MCF 10A (cell line): ENCODE measurements at regions of chr1 and their contacts with region 1.

Region 1: DNA sequence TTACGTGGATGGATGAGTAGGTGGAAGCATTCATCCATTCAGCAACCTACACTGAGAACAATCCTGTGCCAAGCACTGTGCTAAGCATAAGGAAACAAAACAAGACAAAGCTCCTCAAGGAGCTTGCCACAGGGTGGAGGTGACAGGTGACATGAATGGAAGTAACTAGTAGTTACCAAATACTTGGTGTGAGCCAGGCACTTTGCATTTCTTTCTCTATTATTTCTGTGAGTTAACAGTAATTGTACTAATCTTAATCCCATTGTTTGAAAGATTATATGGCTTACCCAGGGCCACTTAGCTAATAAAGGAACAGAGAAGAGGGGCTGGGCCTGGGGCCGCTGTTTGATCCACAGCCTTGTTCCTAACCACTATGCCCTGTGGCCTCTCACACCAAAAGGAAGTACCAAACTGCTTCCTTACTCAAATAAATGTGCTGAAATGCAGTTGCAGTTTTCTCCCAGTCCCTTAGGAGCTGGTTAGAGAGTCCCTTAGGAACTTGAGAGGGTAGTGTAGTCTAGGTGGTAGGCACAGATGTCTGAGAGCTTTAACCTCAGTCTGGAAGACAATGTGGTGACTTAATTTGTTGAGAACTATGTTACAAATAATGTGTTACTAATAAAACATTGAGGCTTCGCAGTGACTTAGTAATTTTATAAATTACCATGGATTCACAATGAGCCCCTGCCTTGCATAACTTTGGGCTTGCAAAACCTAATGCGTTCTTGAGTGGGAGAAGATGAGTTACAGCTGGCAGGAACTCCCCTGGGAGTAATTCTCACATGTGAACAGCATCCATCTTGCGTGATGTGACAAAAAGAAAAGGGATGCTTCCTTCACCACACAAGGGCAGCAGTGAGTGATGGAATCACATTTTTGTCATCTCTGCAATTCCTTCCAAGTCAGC is 69.8 kb downstream of the MPZL1 start:
- DNase-seq: peak; percentile 64
- H3K4me3 Mint-ChIP-seq: peak overlapping the region; percentile 8
- H3K27ac Mint-ChIP-seq: peak overlapping the region; percentile 95
- H3K4me1 Mint-ChIP-seq: peaks cover 65% of the 10 kb centered on the region
- H3K27me3 Mint-ChIP-seq: no peaks in the 10 kb centered on the region
- CTCF ChIP-seq: no peak

Region 2: DNA sequence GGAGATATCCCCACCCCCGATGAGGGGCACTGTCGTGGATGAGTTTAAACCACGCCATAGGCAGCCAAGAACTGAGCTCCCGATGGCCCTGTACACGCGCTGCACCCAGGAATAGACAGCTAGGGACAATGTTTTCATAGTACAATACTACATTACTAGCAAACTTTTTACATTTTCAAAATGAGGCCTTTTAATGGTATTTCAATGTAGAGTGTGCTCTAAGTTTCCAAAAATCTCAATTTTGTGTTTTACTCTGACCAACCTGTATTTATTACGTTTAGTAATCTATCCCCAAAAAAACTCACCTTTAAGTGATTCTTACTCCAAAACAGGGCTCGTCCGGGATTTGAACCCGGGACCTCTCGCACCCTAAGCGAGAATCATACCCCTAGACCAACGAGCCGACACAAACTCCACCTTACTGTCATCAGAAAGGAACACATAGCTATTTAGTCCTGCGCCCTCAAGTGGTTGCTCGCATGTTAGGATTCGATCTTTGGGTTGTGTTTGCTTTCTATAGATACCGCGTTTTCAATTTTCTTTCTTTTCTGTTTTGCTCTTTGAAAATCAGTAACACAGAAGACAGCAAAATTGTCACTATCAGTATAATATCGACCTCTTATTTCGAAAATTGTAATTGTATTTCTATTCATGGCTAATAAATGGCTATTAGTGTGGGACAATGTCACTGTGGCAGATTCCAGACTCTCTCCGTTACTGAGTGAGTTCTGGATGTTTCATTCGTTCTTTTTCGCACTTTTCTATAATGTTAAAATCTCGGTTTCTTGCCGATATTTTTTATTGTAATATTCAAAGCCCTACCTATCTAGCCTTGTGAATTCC is 76.2 kb before region 1 on chr1:
- CTCF ChIA-PET with region 1: interaction called, 46 read pairs
- POLR2A ChIA-PET with region 1: interaction called, 202 read pairs
- intact Hi-C with region 1: no loop called
- DNase-seq: peak; percentile 97
- H3K4me3 Mint-ChIP-seq: peak overlapping the region; percentile 88
- H3K27ac Mint-ChIP-seq: peak overlapping the region; percentile 91
- H3K4me1 Mint-ChIP-seq: peaks cover 16% of the 10 kb centered on the region
- H3K27me3 Mint-ChIP-seq: no peaks in the 10 kb centered on the region
- CTCF ChIP-seq: peak; percentile 98

Region 3: GRCh38 chr1:167721617-167722151 is 69.8 kb before region 1 on chr1 and contains the start of gene MPZL1:
- CTCF ChIA-PET with region 1: interaction called, 46 read pairs
- POLR2A ChIA-PET with region 1: interaction called, 202 read pairs
- intact Hi-C with region 1: no loop called
- DNase-seq: peak; percentile 95
- H3K4me3 Mint-ChIP-seq: peak within 1 kb of the TSS; percentile 84
- H3K27ac Mint-ChIP-seq: peak within 1 kb of the TSS; percentile 92
- H3K4me1 Mint-ChIP-seq: peaks cover 52% of the 10 kb centered on the region
- H3K27me3 Mint-ChIP-seq: no peaks in the 10 kb centered on the region
- CTCF ChIP-seq: no peak
- total RNA-seq, gene MPZL1: 164 and 169 TPM in 2 replicates

Region 4: DNA sequence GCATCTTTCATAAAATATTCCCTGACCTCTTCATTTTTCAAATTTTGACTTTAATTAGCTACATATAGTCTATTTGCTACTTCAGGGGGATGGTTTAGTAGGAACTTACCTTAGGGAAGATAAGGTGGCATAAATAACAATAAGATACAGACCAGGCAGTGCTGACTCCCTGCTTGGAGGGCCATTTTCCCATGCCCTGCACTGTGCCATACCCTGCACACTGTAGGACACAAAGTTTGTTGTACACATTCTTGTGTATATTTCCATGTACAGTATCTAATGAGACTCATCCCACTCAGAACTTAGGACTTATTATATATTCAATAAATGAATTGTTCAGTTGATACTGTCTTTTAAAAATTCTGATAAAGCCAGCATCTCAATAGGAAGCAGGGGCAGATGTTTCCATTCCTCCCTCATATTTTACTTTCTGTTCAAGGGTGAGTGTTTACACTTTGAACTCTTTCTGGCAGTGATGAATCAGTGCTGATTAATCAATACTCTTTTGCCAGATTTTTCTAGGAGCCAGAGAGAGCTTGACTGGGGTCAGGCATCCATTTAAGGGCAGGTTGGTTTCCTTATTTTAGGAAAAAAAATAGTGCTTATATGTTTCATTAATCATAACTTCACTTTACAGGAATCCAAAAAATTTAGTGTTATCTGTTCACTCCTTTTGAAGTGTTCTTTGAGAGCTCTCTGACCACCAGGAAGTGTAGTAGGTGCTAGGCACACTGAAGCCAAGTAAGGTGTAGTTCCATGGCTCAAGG is 39.1 kb before region 1 on chr1:
- CTCF ChIA-PET with region 1: interaction called, 10 read pairs
- POLR2A ChIA-PET with region 1: interaction called, 31 read pairs
- intact Hi-C with region 1: no loop called
- DNase-seq: peak; percentile 36
- H3K4me3 Mint-ChIP-seq: peak overlapping the region; percentile 40
- H3K27ac Mint-ChIP-seq: peak overlapping the region; percentile 94
- H3K4me1 Mint-ChIP-seq: peaks cover 41% of the 10 kb centered on the region
- H3K27me3 Mint-ChIP-seq: no peaks in the 10 kb centered on the region
- CTCF ChIP-seq: no peak

Region 5: DNA sequence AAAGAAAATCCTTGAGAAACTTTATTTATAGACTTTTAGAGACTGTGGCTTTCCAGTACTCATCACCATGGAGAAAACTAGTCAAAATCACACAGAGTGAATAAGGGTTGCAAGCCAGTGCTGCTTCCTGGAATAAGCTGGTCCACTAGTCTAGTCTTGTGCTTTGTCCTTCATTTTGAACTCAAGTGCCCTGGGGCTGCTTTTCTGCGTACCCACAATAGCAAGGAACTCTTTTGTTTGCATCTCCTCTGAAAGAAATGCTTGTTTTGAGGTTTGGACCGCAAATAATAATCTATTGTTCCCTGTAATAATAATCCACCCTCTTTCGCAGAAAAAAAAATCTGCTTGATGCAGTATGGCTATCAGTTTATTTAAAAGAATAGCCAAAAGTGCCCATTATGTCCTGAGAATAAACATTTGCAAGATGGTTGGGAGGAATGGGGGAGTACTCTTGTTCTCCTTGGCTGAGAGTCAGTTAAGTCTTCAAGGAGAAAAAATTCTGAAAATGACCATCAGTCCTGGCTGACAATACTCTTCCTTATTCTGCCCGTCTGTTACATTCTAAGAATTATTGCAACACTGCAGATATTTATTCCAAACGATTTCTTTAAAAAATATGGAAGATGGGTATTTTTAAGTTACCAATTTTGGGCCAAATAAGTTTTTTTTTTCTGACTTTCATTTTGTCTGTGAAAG is 27.9 kb before region 1 on chr1:
- CTCF ChIA-PET with region 1: interaction called, 5 read pairs
- POLR2A ChIA-PET with region 1: interaction called, 10 read pairs
- intact Hi-C with region 1: no loop called
- DNase-seq: peak; percentile 45
- H3K4me3 Mint-ChIP-seq: no peak overlapping the region
- H3K27ac Mint-ChIP-seq: no peak overlapping the region
- H3K4me1 Mint-ChIP-seq: peaks cover 30% of the 10 kb centered on the region
- H3K27me3 Mint-ChIP-seq: no peaks in the 10 kb centered on the region
- CTCF ChIP-seq: no peak

Region 6: DNA sequence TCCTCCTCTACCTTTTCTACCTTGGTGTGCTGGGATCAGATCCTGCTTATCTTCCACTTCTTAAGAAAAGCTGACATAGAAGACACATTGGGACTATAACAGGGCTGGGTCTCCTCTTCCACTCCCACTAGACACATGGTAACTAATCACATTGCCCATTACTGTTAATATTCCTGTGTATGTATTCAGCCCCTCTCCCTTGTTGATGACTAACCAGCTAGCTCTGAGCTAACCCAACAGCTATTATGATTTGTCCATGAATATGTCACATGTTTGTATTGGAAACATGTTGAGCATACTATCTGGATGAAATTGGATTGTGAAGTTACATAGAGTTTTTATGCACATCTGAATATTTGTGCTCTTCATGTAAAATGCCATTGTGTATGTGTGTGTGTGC is 16.8 kb before region 1 on chr1:
- CTCF ChIA-PET with region 1: interaction called, 11 read pairs
- POLR2A ChIA-PET with region 1: interaction called, 30 read pairs
- intact Hi-C with region 1: no loop called
- DNase-seq: no peak
- H3K4me3 Mint-ChIP-seq: no peak overlapping the region
- H3K27ac Mint-ChIP-seq: peak overlapping the region; percentile 0
- H3K4me1 Mint-ChIP-seq: peaks cover 25% of the 10 kb centered on the region
- H3K27me3 Mint-ChIP-seq: no peaks in the 10 kb centered on the region
- CTCF ChIP-seq: no peak

Region 7: GRCh38 chr1:167803358-167804207 is 12.0 kb after region 1 on chr1:
- CTCF ChIA-PET with region 1: interaction called, 67 read pairs
- POLR2A ChIA-PET with region 1: interaction called, 73 read pairs
- intact Hi-C with region 1: no loop called
- DNase-seq: peak; percentile 95
- H3K4me3 Mint-ChIP-seq: peak overlapping the region; percentile 3
- H3K27ac Mint-ChIP-seq: no peak overlapping the region
- H3K4me1 Mint-ChIP-seq: peaks cover 43% of the 10 kb centered on the region
- H3K27me3 Mint-ChIP-seq: no peaks in the 10 kb centered on the region
- CTCF ChIP-seq: peak; percentile 97